ENCODE measurements at regions of chr1 and their contacts with region 1.

Region 1: DNA sequence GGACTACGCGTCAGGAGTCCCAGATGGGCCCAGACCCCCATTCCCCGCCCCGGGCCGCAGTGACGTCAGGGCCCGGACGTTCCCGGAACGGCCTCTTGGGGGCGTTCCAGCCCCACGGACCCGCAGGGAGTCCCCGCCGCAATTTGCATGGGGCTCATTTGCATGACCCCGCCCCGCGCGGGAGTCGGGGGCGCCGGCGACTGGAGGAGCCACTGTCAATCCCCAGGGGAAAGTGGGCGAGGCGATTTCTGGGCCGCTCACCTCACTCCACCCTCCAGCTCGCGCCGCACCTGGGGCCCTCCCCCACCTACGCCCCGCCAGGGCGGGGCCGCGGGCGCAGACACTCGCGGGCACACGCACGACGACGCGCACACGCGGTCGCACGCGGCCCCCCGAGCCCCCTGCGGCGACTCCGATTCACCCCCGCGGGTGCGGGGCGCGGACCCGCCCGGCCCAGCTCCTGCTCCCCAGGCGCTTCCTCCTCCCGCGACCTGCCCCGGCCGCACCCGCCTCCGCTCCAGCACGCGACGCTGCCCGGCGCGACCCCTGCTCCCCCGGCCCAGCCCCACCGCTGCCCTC is 13.2 kb downstream of the AGRN start:
- DNase-seq: peak; percentile 63
- ATAC-seq: peak; percentile 93
- H3K4me3 ChIP-seq: no peak overlapping the region
- H3K27ac ChIP-seq: no peak overlapping the region
- H3K4me1 ChIP-seq: peaks cover 5% of the 10 kb centered on the region; the same call in 1 of the 2 replicates
- H3K27me3 ChIP-seq: no peaks in the 10 kb centered on the region
- CTCF ChIP-seq: peak; percentile 76
- POLR2A ChIP-seq: no peak
- RAD21 ChIP-seq: peak; percentile 78

Region 2: GRCh38 chr1:958823-959729 is 74.0 kb before region 1 on chr1 and contains the start of gene NOC2L:
- CTCF ChIA-PET with region 1: no interaction called
- POLR2A ChIA-PET with region 1: no interaction called
- dilution Hi-C with region 1: no loop called
- in situ Hi-C with region 1: no loop called
- intact Hi-C with region 1: no loop called
- DNase-seq: peak; percentile 79
- ATAC-seq: peak; percentile 89
- H3K4me3 ChIP-seq: peak within 1 kb of the TSS; percentile 98
- H3K27ac ChIP-seq: peak within 1 kb of the TSS; percentile 87
- H3K4me1 ChIP-seq: peaks cover 10% of the 10 kb centered on the region
- H3K27me3 ChIP-seq: no peaks in the 10 kb centered on the region
- CTCF ChIP-seq: no peak
- POLR2A ChIP-seq: peak; percentile 57; the same call in 1 of the 2 replicates
- RAD21 ChIP-seq: no peak
- total RNA-seq, gene NOC2L: 105 and 106 TPM in 2 replicates

Region 3: GRCh38 chr1:1063945-1064831 is 31.1 kb after region 1 on chr1:
- CTCF ChIA-PET with region 1: no interaction called
- POLR2A ChIA-PET with region 1: no interaction called
- dilution Hi-C with region 1: no loop called
- in situ Hi-C with region 1: no loop called
- intact Hi-C with region 1: no loop called
- DNase-seq: peak; percentile 94
- ATAC-seq: peak; percentile 38; the same call in 1 of the 2 replicates
- H3K4me3 ChIP-seq: no peak overlapping the region
- H3K27ac ChIP-seq: no peak overlapping the region; the same call in 1 of the 2 replicates
- H3K4me1 ChIP-seq: peaks cover 15% of the 10 kb centered on the region
- H3K27me3 ChIP-seq: peaks cover 4% of the 10 kb centered on the region; the same call in 1 of the 2 replicates
- CTCF ChIP-seq: peak; percentile 76
- POLR2A ChIP-seq: peak; percentile 43
- RAD21 ChIP-seq: peak; percentile 46

Region 4: GRCh38 chr1:1115786-1116700 is 82.9 kb after region 1 on chr1 and contains the start of gene C1orf159:
- CTCF ChIA-PET with region 1: no interaction called
- POLR2A ChIA-PET with region 1: no interaction called
- dilution Hi-C with region 1: no loop called
- in situ Hi-C with region 1: no loop called
- intact Hi-C with region 1: loop called (anchors 5 kb)
- DNase-seq: peak; percentile 95
- ATAC-seq: peak; percentile 98
- H3K4me3 ChIP-seq: peak within 1 kb of the TSS; percentile 84
- H3K27ac ChIP-seq: peak within 1 kb of the TSS; percentile 20; the same call in 1 of the 2 replicates
- H3K4me1 ChIP-seq: 0 out of 2 replicates have a peak, but pooled peaks cover 1% of the 10 kb centered on the region
- H3K27me3 ChIP-seq: no peaks in the 10 kb centered on the region; the same call in 1 of the 2 replicates
- CTCF ChIP-seq: no peak
- POLR2A ChIP-seq: no peak
- RAD21 ChIP-seq: no peak
- total RNA-seq, gene C1orf159: 2.5 and 2.9 TPM in 2 replicates

Region 5: DNA sequence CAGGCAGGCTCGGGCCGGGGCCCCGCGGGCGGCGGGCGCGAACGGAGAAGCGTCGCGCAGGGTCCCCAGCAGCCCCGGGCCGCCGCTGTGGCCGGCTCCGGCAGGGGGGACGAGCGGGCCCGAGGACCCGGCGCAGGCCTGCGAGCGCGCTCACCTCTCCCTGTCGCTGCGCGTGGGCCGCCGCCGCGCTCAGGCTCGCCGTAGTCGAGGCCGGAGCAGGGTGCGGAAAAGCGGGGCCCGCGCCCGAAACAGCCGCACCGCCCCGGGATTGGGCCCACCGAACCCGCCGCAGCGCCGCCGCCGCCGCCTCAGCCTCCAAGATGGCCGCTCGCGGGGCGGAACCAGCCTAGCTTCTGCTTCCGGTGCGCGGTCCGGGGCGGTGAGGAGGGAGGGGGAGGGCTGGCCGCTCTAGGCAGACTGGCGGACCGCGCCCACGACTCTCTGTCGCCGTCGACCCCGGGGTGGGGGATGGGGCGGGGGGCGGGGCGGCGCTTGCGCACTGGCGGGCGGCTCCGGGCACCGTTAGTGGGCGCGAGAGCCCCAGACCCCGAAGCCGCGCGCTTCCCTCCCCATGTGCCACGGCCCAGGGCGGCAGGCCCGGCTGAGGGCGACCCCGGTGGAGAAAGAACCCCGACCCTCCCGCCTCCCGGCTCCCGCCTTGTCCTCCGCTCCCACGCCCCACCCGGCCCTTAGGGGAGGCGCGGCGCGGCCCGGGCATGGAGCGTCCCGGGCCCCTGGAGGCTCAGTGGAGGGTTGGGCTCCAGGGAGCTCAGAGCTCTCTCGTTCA is 240.6 kb after region 1 on chr1 and contains the start of gene UBE2J2:
- CTCF ChIA-PET with region 1: no interaction called
- POLR2A ChIA-PET with region 1: interaction called, 10 read pairs
- dilution Hi-C with region 1: no loop called
- in situ Hi-C with region 1: no loop called
- intact Hi-C with region 1: no loop called
- DNase-seq: peak; percentile 90
- ATAC-seq: peak; percentile 96
- H3K4me3 ChIP-seq: peak within 1 kb of the TSS; percentile 71
- H3K27ac ChIP-seq: peak within 1 kb of the TSS; percentile 98
- H3K4me1 ChIP-seq: peaks cover 38% of the 10 kb centered on the region
- H3K27me3 ChIP-seq: no peaks in the 10 kb centered on the region
- CTCF ChIP-seq: no peak
- POLR2A ChIP-seq: peak; percentile 72; the same call in 1 of the 2 replicates
- RAD21 ChIP-seq: no peak
- total RNA-seq, gene UBE2J2: 20.3 and 20.6 TPM in 2 replicates